Activated naive CD4-positive, alpha-beta T cell treated with anti-CD3 and anti-CD28 coated beads for 36 hours (primary cell): ENCODE measurements at regions of chr6 and their contacts with region 1.

Region 1: GRCh38 chr6:104789770-104790190 is 69.9 kb downstream of the HACE1 start:
- DNase-seq: peak; percentile 49
- H3K4me3 Mint-ChIP-seq: peak overlapping the region; percentile 59
- H3K27ac Mint-ChIP-seq: peak overlapping the region; percentile 90
- H3K4me1 Mint-ChIP-seq: peaks cover 28% of the 10 kb centered on the region
- H3K27me3 Mint-ChIP-seq: no peaks in the 10 kb centered on the region

Region 2: GRCh38 chr6:104689551-104690205 is 100.1 kb before region 1 on chr6:
- CTCF ChIA-PET with region 1: interaction called, 4 read pairs
- intact Hi-C with region 1: loop called (anchors 5 kb)
- DNase-seq: no peak
- H3K4me3 Mint-ChIP-seq: no peak overlapping the region
- H3K27ac Mint-ChIP-seq: no peak overlapping the region
- H3K4me1 Mint-ChIP-seq: peaks cover 26% of the 10 kb centered on the region
- H3K27me3 Mint-ChIP-seq: no peaks in the 10 kb centered on the region

Region 3: DNA sequence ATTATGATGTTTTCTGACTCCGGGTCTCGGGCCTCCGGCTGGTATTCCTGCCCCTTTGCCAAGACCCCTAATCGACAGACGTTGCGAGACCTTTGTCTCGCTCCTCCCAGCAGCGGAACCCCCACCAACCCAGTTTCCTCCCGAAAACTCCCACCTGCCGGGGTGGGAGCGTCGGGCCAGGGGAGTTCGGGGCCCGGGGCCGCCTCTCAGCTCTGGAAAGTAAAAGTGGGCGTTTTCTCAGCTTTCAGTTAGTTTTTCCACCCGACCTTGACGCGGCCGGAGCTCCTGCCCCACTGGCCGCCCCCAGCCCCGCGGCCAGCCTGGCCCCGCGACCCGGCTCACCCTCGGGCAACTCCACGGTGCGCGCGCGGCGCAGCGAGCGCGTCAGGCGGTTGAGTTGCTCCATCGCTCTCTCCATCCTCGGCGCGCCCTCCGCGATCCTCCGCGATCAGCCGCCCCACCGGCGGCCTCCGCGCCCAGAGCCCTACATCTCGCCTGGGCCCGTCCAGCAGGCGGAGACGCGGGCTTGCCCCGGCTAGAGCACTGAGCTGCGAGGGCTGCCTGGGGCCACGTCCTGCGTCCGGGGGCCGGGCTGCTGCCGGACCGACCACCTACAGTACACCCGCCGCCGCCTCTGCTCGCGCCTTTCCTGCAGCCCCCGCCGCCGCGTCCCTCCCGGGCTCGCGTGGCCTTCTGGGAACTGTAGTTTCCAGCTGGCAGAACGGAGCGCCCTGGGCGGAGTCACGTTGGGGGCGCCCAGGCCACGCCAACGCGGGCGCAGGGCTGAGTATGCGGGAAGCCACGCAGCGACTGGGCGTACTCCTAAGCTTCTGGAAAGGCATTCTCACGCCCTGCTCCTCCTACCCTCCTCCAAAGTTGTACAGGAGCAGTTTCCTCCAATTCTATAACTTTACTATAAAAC is 69.7 kb after region 1 on chr6 and contains the start of gene HACE1:
- CTCF ChIA-PET with region 1: interaction called, 3 read pairs
- intact Hi-C with region 1: loop called (anchors 1 kb)
- DNase-seq: peak; percentile 91
- H3K4me3 Mint-ChIP-seq: peak within 1 kb of the TSS; percentile 91
- H3K27ac Mint-ChIP-seq: peak within 1 kb of the TSS; percentile 73
- H3K4me1 Mint-ChIP-seq: peaks cover 17% of the 10 kb centered on the region
- H3K27me3 Mint-ChIP-seq: peaks cover 4% of the 10 kb centered on the region
- total RNA-seq, gene HACE1: 11.7 to 12.6 TPM

Region 4: DNA sequence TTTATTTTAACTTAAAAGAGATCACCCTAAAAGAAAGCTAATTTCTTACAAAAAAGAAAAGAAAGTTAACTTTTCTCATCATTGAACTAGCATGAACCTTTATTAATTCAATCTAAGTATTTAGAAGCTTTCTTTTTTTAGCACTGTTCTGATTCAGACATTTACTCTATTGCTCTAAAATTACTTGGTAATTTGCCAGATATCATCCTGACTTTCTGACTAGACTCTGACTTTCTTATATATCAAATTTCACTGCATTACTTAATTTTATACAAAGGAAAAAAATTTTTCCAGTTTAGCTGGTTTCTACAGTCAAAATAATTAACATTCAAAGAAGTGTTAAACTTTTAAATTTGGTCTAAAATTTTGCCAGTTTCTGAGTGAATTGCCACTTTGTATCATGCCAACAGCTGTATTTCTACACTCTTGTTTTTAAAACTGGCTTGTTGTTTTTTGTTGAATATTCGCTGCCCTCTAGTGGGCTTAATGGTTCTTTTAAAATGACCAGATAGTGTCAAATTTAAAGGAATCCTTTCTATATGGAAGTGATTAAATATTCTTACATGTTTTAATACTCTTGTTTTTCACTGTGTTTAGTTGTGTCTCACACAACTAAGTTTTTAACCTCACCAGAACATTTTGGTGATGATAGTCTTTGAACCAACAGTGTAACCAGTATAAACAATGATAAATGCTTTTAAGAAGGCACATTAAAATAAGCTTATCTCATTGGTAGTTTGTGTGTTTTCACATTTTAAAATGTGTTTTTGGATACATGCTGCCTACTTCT is 288.0 kb after region 1 on chr6:
- CTCF ChIA-PET with region 1: no interaction called
- intact Hi-C with region 1: loop called (anchors 1 kb)
- DNase-seq: no peak
- H3K4me3 Mint-ChIP-seq: no peak overlapping the region
- H3K27ac Mint-ChIP-seq: no peak overlapping the region
- H3K4me1 Mint-ChIP-seq: no peaks in the 10 kb centered on the region
- H3K27me3 Mint-ChIP-seq: peaks cover 9% of the 10 kb centered on the region

Region 5: DNA sequence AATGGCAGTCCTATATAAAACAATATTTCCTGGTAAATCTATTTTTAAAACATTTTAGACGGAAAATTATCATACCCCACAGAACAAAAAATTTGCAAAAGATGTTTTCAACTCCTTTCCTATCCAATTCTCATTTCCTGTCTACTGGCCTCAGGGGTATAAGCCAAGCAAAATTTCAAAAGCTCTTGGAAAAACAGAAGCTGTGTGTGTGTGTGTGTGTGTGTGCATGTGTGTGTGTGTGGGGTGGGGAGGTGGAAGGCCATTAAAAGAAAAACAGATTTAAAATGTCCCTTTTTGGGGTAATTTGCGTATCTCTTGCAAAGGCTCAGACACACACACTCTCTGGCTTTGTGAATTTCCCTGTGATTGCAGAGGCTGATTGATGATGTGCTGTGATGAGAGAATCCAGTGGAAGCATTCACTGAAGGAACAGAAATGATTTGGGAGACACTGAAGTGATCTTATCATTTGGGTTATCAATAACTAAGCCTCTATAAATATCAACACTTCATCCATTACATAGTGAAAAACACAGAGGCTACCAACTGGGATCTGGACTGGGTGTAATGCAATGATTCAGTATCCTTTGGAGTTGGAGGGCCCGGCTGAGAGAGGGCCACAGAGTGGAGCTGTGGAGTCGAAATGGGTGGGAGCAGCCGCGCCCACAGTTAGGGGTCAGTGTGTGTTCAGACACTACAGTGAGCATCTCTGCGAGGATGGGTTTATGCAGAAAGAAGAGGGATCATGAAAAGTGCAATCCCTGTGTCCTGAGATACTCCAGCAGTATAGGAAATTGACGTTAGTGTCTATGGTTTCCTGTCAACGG is 719.9 kb after region 1 on chr6:
- CTCF ChIA-PET with region 1: no interaction called
- intact Hi-C with region 1: no loop called
- DNase-seq: no peak
- H3K4me3 Mint-ChIP-seq: no peak overlapping the region
- H3K27ac Mint-ChIP-seq: no peak overlapping the region
- H3K4me1 Mint-ChIP-seq: no peaks in the 10 kb centered on the region
- H3K27me3 Mint-ChIP-seq: peaks cover 20% of the 10 kb centered on the region